Activated CD8-positive, alpha-beta memory T cell treated with anti-CD3 and anti-CD28 coated beads, Interleukin-2, amount 10 ng/mL, durations not matched to agents 7 days and 5 days (primary cell): ENCODE measurements at regions of chr15 and their contacts with region 1.

Region 1: DNA sequence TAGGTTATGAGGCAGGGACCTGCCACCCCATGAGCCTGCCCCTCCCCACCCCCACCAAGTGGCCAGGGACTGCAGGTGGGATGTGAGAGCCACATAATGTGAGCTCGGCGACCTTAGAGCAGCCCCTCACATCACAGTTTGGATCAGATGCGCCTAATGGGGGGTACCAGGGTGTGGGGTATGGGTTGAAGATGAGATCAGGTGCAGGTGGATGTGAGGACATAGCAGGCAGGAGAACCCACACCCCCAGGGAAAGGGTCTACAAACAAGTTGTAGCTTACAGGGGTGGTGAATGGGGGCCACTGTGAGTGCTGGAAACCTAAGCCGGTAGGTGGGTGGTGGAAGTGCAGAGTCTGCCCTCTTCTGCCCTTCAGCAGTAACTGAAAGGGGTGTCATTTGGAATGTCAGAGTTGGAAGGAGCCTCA is 94.0 kb downstream of the CORO2B start:
- DNase-seq: no peak
- ATAC-seq: no peak
- H3K4me3 Mint-ChIP-seq: no peak overlapping the region
- H3K27ac Mint-ChIP-seq: no peak overlapping the region
- H3K4me1 Mint-ChIP-seq: peaks cover 2% of the 10 kb centered on the region
- H3K27me3 Mint-ChIP-seq: peaks cover 21% of the 10 kb centered on the region

Region 2: GRCh38 chr15:68550481-68551295 is 122.1 kb before region 1 on chr15:
- CTCF ChIA-PET with region 1: interaction called, 134 read pairs
- DNase-seq: peak; percentile 82
- ATAC-seq: no peak
- H3K4me3 Mint-ChIP-seq: no peak overlapping the region
- H3K27ac Mint-ChIP-seq: no peak overlapping the region
- H3K4me1 Mint-ChIP-seq: peaks cover 10% of the 10 kb centered on the region
- H3K27me3 Mint-ChIP-seq: peaks cover 43% of the 10 kb centered on the region

Region 3: GRCh38 chr15:68559345-68560310 is 113.2 kb before region 1 on chr15:
- CTCF ChIA-PET with region 1: interaction called, 134 read pairs
- DNase-seq: peak; percentile 74
- ATAC-seq: peak; percentile 92
- H3K4me3 Mint-ChIP-seq: peak overlapping the region; percentile 56
- H3K27ac Mint-ChIP-seq: no peak overlapping the region
- H3K4me1 Mint-ChIP-seq: peaks cover 16% of the 10 kb centered on the region
- H3K27me3 Mint-ChIP-seq: peaks cover 50% of the 10 kb centered on the region

Region 4: GRCh38 chr15:68565726-68566125 is 107.1 kb before region 1 on chr15:
- CTCF ChIA-PET with region 1: interaction called, 72 read pairs
- DNase-seq: no peak
- ATAC-seq: no peak
- H3K4me3 Mint-ChIP-seq: no peak overlapping the region
- H3K27ac Mint-ChIP-seq: no peak overlapping the region
- H3K4me1 Mint-ChIP-seq: no peaks in the 10 kb centered on the region
- H3K27me3 Mint-ChIP-seq: peaks cover 52% of the 10 kb centered on the region

Region 5: GRCh38 chr15:68658151-68658550 is 14.6 kb before region 1 on chr15:
- CTCF ChIA-PET with region 1: interaction called, 19 read pairs
- DNase-seq: no peak
- ATAC-seq: no peak
- H3K4me3 Mint-ChIP-seq: no peak overlapping the region
- H3K27ac Mint-ChIP-seq: no peak overlapping the region
- H3K4me1 Mint-ChIP-seq: no peaks in the 10 kb centered on the region
- H3K27me3 Mint-ChIP-seq: peaks cover 15% of the 10 kb centered on the region